Lower lobe of right lung (tissue), 2 donors: ENCODE measurements at regions of chr7 and their contacts with region 1.

Region 1: GRCh38 chr7:107150375-107151073 is 18.3 kb upstream of the HBP1 start:
- DNase-seq: peak; percentile 67
- ATAC-seq: peak; percentile 77 to 79
- H3K4me3 ChIP-seq: no peak overlapping the region
- H3K27ac ChIP-seq: no peak overlapping the region
- H3K4me1 ChIP-seq: peaks cover 7% of the 10 kb centered on the region
- H3K27me3 ChIP-seq: no peaks in the 10 kb centered on the region
- CTCF ChIP-seq: peak; percentile 66

Region 2: DNA sequence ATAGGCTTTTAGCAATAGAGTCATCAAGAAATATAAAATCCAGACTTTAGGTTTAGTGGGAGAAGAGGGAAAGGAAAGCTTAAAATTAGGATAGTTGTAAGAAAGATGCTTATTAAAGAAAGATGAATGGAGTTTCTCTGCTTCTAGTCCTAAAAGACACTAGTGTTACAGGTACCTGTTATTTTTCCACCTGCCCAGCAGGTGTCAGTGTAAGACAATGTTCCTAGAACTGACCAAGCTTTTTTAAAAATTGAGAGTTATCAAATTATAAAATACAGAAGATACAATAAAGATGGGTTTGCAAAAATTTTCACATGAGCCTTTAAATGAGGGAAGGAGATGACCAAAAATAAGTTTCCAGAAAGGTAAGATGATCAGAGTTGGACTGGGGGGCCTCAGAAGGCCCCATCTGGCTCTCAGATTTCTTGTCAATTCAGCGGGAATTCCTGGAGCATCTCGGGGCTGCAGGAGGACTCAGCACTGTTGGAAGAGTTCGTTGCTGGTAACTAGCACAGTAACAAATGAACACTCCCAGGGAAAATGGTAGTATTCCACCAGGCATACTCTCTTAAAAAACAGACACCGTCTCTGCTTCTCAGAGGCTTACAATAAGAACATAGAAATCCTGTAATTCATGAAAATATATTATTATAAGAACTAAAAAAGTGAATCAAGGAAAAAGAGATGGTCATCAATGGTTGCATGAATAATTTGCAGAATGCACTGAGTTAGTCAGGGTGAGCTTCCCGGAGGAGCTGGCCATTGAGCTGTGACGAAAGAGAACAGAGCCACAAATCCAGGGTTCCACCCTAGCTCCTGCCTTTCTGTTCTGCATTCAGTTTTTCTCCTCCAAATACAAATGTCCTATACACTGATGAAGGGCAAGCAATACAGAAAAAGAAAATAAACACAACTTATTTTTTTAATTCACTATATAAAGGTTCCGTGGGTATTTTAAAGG is 357.2 kb before region 1 on chr7:
- intact Hi-C with region 1: loop called (anchors 5 kb)
- DNase-seq: no peak
- ATAC-seq: no peak
- H3K4me3 ChIP-seq: no peak overlapping the region
- H3K27ac ChIP-seq: no peak overlapping the region
- H3K4me1 ChIP-seq: no peaks in the 10 kb centered on the region
- H3K27me3 ChIP-seq: no peaks in the 10 kb centered on the region
- CTCF ChIP-seq: peak; percentile 64

Region 3: GRCh38 chr7:106947244-106947728 is 203.2 kb before region 1 on chr7:
- intact Hi-C with region 1: loop called (anchors 5 kb)
- DNase-seq: no peak
- ATAC-seq: peak; percentile 80 to 81
- H3K4me3 ChIP-seq: no peak overlapping the region
- H3K27ac ChIP-seq: no peak overlapping the region
- H3K4me1 ChIP-seq: no peaks in the 10 kb centered on the region
- H3K27me3 ChIP-seq: no peaks in the 10 kb centered on the region
- CTCF ChIP-seq: peak; percentile 61

Region 4: GRCh38 chr7:107253599-107253998 is 103.1 kb after region 1 on chr7:
- intact Hi-C with region 1: no loop called
- DNase-seq: no peak
- ATAC-seq: no peak
- H3K4me3 ChIP-seq: no peak overlapping the region
- H3K27ac ChIP-seq: no peak overlapping the region
- H3K4me1 ChIP-seq: no peaks in the 10 kb centered on the region
- H3K27me3 ChIP-seq: no peaks in the 10 kb centered on the region
- CTCF ChIP-seq: no peak

Region 5: GRCh38 chr7:107264723-107265122 is 114.2 kb after region 1 on chr7:
- intact Hi-C with region 1: no loop called
- DNase-seq: no peak
- ATAC-seq: no peak
- H3K4me3 ChIP-seq: no peak overlapping the region
- H3K27ac ChIP-seq: no peak overlapping the region
- H3K4me1 ChIP-seq: no peaks in the 10 kb centered on the region
- H3K27me3 ChIP-seq: no peaks in the 10 kb centered on the region
- CTCF ChIP-seq: no peak

Region 6: GRCh38 chr7:107528466-107528865 is 377.9 kb after region 1 on chr7:
- intact Hi-C with region 1: no loop called
- DNase-seq: no peak
- ATAC-seq: no peak
- H3K4me3 ChIP-seq: no peak overlapping the region
- H3K27ac ChIP-seq: no peak overlapping the region
- H3K4me1 ChIP-seq: no peaks in the 10 kb centered on the region
- H3K27me3 ChIP-seq: no peaks in the 10 kb centered on the region
- CTCF ChIP-seq: no peak